ENCODE measurements at regions of chr1 and their contacts with region 1.

Region 1: DNA sequence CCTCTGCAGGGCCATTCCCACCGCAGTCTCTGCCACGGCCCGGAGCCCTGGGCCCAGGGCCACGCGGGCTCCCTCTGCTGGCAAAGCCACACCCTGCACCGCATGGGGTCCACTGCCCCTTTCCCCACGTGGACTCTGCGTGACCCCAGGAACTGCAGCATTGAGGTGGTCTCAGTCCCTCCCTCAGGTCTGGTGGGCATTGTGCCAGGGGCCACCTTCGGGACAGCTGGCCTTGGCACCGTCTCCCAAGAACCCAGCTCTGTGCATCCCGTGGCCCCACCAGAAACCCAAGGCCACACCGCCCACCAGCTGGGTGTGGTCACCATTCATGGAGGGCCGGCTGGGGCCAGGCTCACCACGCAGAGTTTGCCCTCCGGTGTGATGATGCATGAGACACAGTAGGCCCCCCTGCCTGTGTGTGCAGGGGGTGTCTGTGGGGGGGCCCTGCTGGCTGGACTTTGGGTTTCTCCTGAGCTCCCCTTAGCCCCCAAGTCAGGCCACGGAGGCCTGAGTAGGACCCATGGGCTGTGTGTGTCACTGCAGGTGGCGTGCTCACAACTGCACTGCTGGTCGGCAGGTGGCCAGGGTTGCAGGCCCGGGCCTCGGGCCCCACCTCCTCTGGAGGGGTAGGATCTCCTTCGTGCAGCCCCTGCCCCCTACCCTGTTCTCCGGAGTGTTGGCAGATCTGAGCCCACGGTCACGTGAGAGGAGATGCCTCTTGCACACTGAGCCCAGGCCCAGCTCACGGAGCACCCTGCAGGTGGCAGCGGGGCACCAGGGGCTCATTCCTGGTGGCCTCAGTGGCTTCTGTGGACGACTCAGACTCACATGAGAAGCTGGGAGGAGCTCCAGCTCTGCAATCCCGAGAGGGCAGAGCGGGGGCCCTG is 5.8 kb downstream of the VWA1 start:
- DNase-seq: no peak
- H3K4me3 ChIP-seq: no peak overlapping the region
- H3K27ac ChIP-seq: no peak overlapping the region
- H3K27me3 ChIP-seq: no peaks in the 10 kb centered on the region
- CTCF ChIP-seq: peak; percentile 83

Region 2: GRCh38 chr1:1430114-1430982 is 10.9 kb before region 1 on chr1:
- CTCF ChIA-PET with region 1: interaction called, 13 read pairs
- POLR2A ChIA-PET with region 1: interaction called, 3 read pairs
- DNase-seq: no peak
- H3K4me3 ChIP-seq: no peak overlapping the region
- H3K27ac ChIP-seq: peak overlapping the region; percentile 80
- H3K27me3 ChIP-seq: no peaks in the 10 kb centered on the region
- CTCF ChIP-seq: peak; percentile 45